ENCODE measurements at regions of chr22 and their contacts with region 1.

Region 1: GRCh38 chr22:37199103-37199759 is 11.2 kb upstream of the C1QTNF6 start:
- DNase-seq: peak; percentile 99
- H3K4me3 Mint-ChIP-seq: peak overlapping the region; percentile 83
- H3K27ac Mint-ChIP-seq: peak overlapping the region; percentile 95
- H3K4me1 Mint-ChIP-seq: peaks cover 46% of the 10 kb centered on the region
- H3K27me3 Mint-ChIP-seq: no peaks in the 10 kb centered on the region

Region 2: DNA sequence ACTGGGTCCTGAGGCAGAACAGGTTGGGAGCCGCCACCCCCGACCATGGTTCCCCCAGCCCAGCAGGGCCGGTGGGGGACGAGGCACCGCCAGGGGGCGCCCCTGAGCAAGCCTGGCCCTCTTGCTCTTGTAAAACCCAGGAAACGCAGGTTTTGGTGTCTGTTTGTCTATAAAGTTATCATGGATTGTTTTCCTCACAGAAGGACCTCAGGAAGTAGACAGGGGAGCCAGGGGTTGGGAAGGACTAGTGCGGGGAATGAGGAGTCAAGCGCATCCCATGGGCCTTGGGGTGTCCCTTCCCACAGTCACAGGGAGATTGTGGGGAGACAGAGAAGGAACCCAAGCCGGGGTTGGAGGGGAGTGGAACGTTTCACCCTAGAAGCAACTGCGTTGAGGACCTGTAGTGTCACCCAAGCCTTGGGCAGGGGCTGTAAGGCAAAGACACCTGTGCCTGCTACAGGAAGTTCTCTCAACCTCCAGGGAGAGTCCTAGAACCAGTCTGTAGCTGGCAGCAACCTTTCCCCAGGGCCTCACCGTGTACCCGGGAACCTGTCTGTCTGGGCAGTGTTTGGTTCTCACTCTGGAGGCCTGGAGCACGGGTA is 121.2 kb before region 1 on chr22:
- CTCF ChIA-PET with region 1: interaction called, 25 read pairs
- DNase-seq: peak; percentile 89
- H3K4me3 Mint-ChIP-seq: peak overlapping the region; percentile 1
- H3K27ac Mint-ChIP-seq: peak overlapping the region; percentile 95
- H3K4me1 Mint-ChIP-seq: peaks cover 64% of the 10 kb centered on the region
- H3K27me3 Mint-ChIP-seq: peaks cover 34% of the 10 kb centered on the region

Region 3: GRCh38 chr22:37166675-37167066 is 32.6 kb before region 1 on chr22:
- CTCF ChIA-PET with region 1: interaction called, 83 read pairs
- DNase-seq: peak; percentile 89
- H3K4me3 Mint-ChIP-seq: peak overlapping the region; percentile 64
- H3K27ac Mint-ChIP-seq: peak overlapping the region; percentile 85
- H3K4me1 Mint-ChIP-seq: peaks cover 89% of the 10 kb centered on the region
- H3K27me3 Mint-ChIP-seq: peaks cover 13% of the 10 kb centered on the region

Region 4: GRCh38 chr22:37229805-37230672 is 30.8 kb after region 1 on chr22:
- CTCF ChIA-PET with region 1: interaction called, 12 read pairs
- DNase-seq: peak; percentile 96
- H3K4me3 Mint-ChIP-seq: peak overlapping the region; percentile 71
- H3K27ac Mint-ChIP-seq: peak overlapping the region; percentile 98
- H3K4me1 Mint-ChIP-seq: peaks cover 92% of the 10 kb centered on the region
- H3K27me3 Mint-ChIP-seq: no peaks in the 10 kb centered on the region

Region 5: DNA sequence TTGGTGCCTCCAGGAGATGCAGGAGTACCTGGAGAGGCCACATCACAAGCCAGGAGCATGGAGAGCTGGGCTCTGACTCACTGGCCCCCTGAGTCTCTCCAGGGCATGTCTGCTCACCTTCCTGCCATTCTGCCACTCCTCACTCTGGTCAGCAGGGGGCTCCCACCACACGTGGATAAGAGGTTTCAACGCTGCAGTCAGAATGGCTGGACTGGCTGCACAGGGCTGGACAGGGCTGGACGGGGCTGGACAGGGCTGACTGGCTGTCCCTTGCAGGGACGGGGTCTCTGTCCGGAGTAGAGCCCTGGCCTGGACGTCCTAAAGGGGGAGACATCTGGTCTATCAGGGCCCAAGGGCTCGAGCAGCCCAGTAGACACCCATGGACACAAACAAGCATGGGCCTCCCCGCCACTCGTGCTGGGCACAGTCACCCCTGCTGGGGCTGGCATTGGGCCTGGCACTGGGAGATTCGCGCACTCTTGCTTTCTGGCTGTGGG is 117.7 kb after region 1 on chr22:
- CTCF ChIA-PET with region 1: no interaction called
- DNase-seq: peak; percentile 81
- H3K4me3 Mint-ChIP-seq: no peak overlapping the region
- H3K27ac Mint-ChIP-seq: no peak overlapping the region
- H3K4me1 Mint-ChIP-seq: peaks cover 41% of the 10 kb centered on the region
- H3K27me3 Mint-ChIP-seq: peaks cover 51% of the 10 kb centered on the region

Measured in activated naive CD4-positive, alpha-beta T cell treated with anti-CD3 and anti-CD28 coated beads, Interleukin-2, amount 10 ng/mL, durations not matched to agents 7 days and 5 days (primary cell).